Psoas muscle (tissue), 8 donors: ENCODE measurements at regions of chr5 and their contacts with region 1.

Region 1: DNA sequence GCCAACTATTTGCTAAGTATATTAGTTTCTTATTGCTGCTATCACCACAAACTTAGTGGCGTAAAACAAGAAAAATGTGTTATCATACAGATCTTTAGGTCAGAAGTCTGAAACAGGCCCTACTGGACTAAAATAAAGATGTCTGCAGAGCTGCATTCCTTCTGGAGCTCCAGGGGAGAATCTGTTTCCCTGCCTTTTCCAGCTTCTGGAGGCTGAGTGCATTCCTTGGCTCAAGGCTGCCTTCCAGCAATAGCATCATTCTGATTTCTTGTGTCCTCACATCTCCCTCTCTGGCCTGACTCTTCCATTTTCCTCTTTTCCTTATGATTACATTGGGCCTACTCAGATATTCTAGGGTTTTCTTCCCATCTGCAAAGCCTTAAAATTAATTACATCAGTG is 15.9 kb downstream of the MAN2A1 start:
- DNase-seq: no peak
- ATAC-seq: no peak
- H3K4me3 ChIP-seq: no peak overlapping the region
- H3K27ac ChIP-seq: peak overlapping the region; percentile 80
- H3K4me1 ChIP-seq: peaks cover 52% of the 10 kb centered on the region
- H3K27me3 ChIP-seq: no peaks in the 10 kb centered on the region
- CTCF ChIP-seq: no peak

Region 2: DNA sequence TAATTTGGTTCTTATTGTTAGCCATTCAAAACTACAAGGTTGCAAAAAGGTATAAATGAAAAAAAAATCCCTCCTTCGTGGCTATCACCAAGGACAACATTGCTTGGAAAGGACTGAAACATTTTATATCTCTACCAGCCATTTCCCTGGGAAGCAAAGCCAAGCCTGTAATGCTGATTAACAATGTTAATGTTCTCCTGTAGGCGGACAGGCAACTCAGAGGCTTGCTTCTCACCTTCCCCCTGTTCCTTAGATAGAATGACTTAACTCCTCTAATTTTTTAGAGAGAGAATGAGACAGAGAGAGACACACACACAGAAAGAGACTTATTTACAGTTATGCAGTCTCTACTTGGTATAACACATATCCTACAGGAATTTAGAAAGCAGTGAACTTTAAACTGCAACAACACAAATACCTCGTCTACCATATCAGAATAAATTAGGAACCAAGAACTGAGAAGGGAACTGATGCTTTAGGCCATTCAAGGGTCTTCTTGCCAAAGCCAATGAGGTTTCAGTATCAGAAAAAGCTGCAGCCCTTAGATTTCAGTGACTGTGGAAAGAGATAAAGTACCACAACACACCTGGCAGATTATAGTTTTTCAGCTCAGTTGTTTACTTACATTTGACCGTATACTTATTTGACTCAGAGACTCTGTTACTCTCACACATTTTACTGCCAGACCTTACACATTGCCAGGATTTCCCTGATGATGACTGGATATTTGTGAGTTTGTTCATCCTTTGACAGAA is 36.8 kb before region 1 on chr5:
- intact Hi-C with region 1: no loop called
- DNase-seq: no peak
- ATAC-seq: no peak
- H3K4me3 ChIP-seq: no peak overlapping the region
- H3K27ac ChIP-seq: no peak overlapping the region
- H3K4me1 ChIP-seq: no peaks in the 10 kb centered on the region
- H3K27me3 ChIP-seq: no peaks in the 10 kb centered on the region
- CTCF ChIP-seq: no peak

Region 3: DNA sequence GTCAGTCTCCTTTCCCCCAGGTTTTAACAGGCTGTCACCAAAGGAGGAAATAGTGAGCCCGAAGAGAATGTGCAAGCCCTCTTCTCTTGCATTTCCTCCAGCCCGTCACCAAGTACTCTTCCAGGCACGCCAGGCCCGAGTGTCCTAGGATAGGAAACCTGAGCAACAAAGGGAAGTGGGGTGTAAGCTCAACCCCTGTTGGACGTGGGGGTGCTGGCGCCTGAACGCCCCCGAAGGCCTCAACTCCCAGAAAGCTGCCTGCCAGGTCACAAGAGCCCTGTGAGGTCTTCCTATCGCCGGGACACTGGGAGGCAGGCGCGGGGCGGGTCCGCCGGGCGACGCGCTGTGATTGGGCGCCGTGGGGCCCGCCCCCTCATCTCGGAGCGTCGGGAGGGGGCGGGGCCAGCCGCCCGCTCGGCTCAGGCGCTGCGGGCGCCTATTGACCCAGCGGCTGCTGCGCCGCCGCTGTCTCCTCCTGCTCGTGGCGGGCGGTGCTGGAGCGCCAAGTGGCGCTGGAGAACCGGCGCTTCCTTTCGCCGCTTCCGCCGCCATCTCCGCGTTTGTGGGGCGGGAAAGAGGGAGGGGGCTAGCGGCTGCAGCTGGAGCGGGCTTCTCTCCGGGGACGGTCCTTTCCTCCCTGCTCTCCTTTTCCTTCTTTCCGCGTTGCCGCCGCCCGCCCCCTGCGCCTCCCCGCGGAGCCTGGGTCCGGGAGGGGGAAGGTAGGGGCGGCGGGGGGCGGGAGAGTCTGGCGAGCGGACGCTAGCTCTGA is 16.4 kb before region 1 on chr5:
- intact Hi-C with region 1: no loop called
- DNase-seq: peak; percentile 88 to 93
- ATAC-seq: peak; percentile 86 to 94 (median 92)
- H3K4me3 ChIP-seq: peak overlapping the region; percentile 96
- H3K27ac ChIP-seq: peak overlapping the region; percentile 95
- H3K4me1 ChIP-seq: peaks cover 28% of the 10 kb centered on the region
- H3K27me3 ChIP-seq: no peaks in the 10 kb centered on the region
- CTCF ChIP-seq: peak; percentile 11

Region 4: DNA sequence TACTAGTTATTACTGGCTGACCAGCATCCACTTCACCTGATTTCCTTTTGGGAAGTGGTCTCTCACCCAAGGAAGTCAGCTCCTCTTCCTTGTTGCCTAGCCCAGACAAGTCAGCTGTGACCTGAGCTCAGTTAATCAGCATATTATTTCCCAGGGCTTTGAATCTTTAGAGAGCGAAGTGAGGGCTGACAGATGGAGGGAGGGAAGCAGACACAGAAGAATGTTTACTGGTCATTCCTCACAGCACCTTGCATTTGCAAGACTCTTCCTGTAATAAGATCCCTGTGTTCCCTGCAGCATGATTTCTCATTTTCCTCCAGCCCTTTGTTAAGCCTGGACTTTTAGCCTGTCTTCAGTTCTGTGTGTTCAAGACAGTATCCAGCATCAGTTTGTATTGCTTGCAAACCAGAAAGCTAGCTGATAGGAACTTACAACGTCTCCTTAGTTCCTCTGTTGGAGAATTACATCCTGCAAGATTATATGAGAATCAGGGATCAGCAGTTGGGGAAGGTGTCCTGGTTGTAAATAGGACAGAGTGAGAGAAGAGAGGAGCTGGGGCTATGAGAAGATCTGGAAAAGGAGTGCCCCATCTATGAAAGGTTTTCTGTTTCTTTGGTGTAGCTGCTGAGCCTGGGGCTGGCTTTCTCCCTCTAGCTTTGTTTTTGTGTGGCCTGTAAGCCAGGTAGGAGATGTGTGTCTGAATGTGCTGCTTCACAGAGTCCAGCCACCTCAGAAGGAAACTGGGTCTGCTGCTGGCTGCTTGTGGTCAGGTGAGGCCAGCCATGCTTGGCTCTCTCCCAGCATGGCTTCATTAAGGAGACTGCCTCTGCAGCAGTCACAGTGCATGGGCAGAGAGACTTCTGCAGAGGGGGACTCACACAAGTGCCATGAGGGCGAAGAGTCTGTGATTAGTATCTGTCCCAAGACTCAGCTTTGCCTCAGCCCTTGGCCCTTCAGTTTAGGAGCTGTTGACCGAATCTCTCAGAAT is 34.4 kb after region 1 on chr5:
- intact Hi-C with region 1: loop called in 1 of 2 experiments (anchors 5 kb)
- DNase-seq: no peak
- ATAC-seq: peak; percentile 55 to 76 (median 64)
- H3K4me3 ChIP-seq: no peak overlapping the region
- H3K27ac ChIP-seq: peak overlapping the region; percentile 40
- H3K4me1 ChIP-seq: peaks cover 43% of the 10 kb centered on the region
- H3K27me3 ChIP-seq: no peaks in the 10 kb centered on the region
- CTCF ChIP-seq: no peak